ENCODE measurements at regions of chr7 and their contacts with region 1.

Region 1: DNA sequence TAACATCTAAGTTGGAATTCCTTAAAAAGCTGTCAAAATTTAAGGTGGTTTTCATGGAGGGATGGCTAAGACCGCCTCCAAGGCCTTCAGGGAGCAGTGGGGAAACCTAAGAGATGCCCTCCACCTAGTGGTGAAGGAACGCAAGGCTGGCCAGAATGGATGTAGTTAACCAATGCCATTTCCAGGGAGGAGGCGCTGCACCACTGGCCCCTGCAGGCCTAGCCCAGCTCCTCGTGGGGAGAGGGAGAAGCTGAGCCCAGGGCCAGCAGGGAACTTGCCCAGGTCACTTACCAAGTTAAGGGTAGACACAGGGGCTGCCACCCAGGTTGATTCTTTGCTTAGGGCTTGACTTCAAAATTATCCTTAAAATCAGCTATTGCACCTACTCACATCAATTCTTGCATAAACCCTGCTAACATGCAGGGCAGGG is 32.0 kb downstream of the FIGNL1 start:
- DNase-seq: peak; percentile 76
- H3K4me3 ChIP-seq: no peak overlapping the region
- H3K27ac ChIP-seq: no peak overlapping the region
- H3K4me1 ChIP-seq: no peaks in the 10 kb centered on the region
- H3K27me3 ChIP-seq: no peaks in the 10 kb centered on the region
- CTCF ChIP-seq: peak in 3 of 4 experiments; percentile 23 to 59 (median 44)
- EP300 ChIP-seq: no peak
- POLR2A ChIP-seq: no peak

Region 2: DNA sequence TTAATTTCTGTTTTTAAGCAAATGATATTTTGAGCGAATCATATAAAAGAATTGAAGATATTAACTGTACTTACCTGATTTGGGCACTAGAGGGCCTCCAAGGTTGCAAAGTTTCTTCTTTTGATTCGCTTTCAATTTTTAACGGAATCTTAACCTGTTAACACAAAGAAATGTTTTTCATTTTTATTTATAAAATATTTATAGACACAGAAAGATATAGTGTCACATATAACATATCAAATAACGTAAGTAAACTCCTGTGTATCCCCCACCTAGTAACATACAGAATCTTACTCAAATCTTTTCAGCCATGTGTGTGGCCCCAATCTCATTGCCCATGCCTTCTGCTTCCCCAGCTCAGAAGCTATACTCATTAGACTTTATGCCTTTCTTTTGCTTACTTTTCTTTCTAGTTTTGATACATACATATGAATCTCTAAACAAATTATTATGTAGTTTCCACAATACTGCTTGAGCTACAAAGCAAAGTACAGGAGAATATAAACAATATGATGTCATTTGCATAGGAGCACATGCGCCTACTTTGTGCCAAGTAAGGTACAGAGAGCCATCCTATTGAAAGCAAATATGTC is 275.6 kb before region 1 on chr7:
- intact Hi-C with region 1: loop called (anchors 5 kb)
- DNase-seq: no peak
- H3K4me3 ChIP-seq: no peak overlapping the region
- H3K27ac ChIP-seq: no peak overlapping the region
- H3K4me1 ChIP-seq: no peaks in the 10 kb centered on the region
- H3K27me3 ChIP-seq: no peaks in the 10 kb centered on the region
- CTCF ChIP-seq: peak in 3 of 4 experiments; percentile 33 to 72 (median 38)
- EP300 ChIP-seq: no peak
- POLR2A ChIP-seq: no peak